ENCODE measurements at regions of chr12 and their contacts with region 1.

Region 1: GRCh38 chr12:19273482-19274330 is 144.2 kb downstream of the PLEKHA5 start:
- DNase-seq: peak; percentile 62 to 87 (median 74)
- H3K4me3 ChIP-seq: no peak overlapping the region
- H3K4me3 Mint-ChIP-seq: peak overlapping the region in 6 of 8 donors; percentile 10 to 79 (median 52)
- H3K27ac ChIP-seq: no peak overlapping the region
- H3K27ac Mint-ChIP-seq: peak overlapping the region; percentile 76 to 89 (median 81)
- H3K4me1 ChIP-seq: peaks cover 20% of the 10 kb centered on the region
- H3K4me1 Mint-ChIP-seq: peaks cover 15 to 29% (median 21%) of the 10 kb centered on the region in 4 donors
- H3K27me3 ChIP-seq: no peaks in the 10 kb centered on the region
- H3K27me3 Mint-ChIP-seq: peaks cover 0 to 2% of the 10 kb centered on the region in 2 donors

Region 2: GRCh38 chr12:19129486-19130223 is 144.1 kb before region 1 on chr12 and contains the start of gene PLEKHA5:
- CTCF ChIA-PET with region 1: no interaction called
- POLR2A ChIA-PET with region 1: interaction called, 7 read pairs
- intact Hi-C with region 1: loop called (anchors 5 kb)
- DNase-seq: peak; percentile 29 to 53 (median 38)
- H3K4me3 ChIP-seq: peak within 1 kb of the TSS; percentile 55 to 74
- H3K4me3 Mint-ChIP-seq: peak within 1 kb of the TSS; percentile 86 to 93 (median 91)
- H3K27ac ChIP-seq: peak within 1 kb of the TSS; percentile 38
- H3K27ac Mint-ChIP-seq: peak within 1 kb of the TSS; percentile 74 to 90 (median 88)
- H3K4me1 ChIP-seq: peaks cover 14% of the 10 kb centered on the region
- H3K4me1 Mint-ChIP-seq: peaks cover 10 to 27% (median 19%) of the 10 kb centered on the region in 4 donors
- H3K27me3 ChIP-seq: no peaks in the 10 kb centered on the region
- H3K27me3 Mint-ChIP-seq: peaks cover 0 to 7% of the 10 kb centered on the region in 2 donors
- total RNA-seq, gene PLEKHA5: 15.6 to 15.9 TPM

Region 3: DNA sequence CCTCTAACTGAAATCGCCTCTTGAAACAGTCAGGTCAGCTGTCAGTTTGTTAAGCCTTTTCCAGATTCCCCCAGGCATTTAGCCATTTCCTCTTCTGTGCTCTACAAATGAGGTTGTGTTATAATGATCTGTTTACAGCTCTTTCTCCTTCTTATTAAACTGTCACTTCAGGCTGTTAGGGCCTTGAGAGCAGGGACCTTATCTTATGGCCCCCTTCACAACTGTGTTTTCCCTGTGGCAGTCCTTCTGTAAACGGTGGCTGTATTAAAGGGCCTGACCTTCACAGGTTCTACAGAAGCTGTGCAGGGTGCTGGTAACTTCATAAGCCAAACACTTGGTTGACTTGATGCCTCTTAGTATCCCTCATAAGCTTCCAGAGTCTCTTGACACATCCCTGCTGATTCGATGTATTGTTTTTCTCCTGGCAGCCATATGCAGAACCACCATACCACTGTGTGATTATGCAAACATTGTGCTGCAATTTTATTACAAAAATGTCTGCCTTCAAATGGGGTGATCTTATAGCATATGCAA is 39.5 kb before region 1 on chr12:
- CTCF ChIA-PET with region 1: no interaction called
- POLR2A ChIA-PET with region 1: interaction called, 3 read pairs
- intact Hi-C with region 1: loop called (anchors 5 kb)
- DNase-seq: no peak
- H3K4me3 ChIP-seq: no peak overlapping the region
- H3K4me3 Mint-ChIP-seq: no peak overlapping the region
- H3K27ac ChIP-seq: no peak overlapping the region
- H3K27ac Mint-ChIP-seq: peak overlapping the region in 1 of 7 donors; percentile 17
- H3K4me1 ChIP-seq: no peaks in the 10 kb centered on the region
- H3K4me1 Mint-ChIP-seq: peaks cover 0 to 18% (median 1%) of the 10 kb centered on the region in 4 donors
- H3K27me3 ChIP-seq: no peaks in the 10 kb centered on the region
- H3K27me3 Mint-ChIP-seq: no peaks in the 10 kb centered on the region

Region 4: GRCh38 chr12:19248929-19249602 is 24.6 kb before region 1 on chr12:
- CTCF ChIA-PET with region 1: no interaction called
- POLR2A ChIA-PET with region 1: no interaction called
- intact Hi-C with region 1: no loop called
- DNase-seq: no peak
- H3K4me3 ChIP-seq: no peak overlapping the region
- H3K4me3 Mint-ChIP-seq: no peak overlapping the region
- H3K27ac ChIP-seq: no peak overlapping the region
- H3K27ac Mint-ChIP-seq: peak overlapping the region in 1 of 7 donors; percentile 20
- H3K4me1 ChIP-seq: no peaks in the 10 kb centered on the region
- H3K4me1 Mint-ChIP-seq: no peaks in the 10 kb centered on the region
- H3K27me3 ChIP-seq: no peaks in the 10 kb centered on the region
- H3K27me3 Mint-ChIP-seq: peaks cover 0 to 1% of the 10 kb centered on the region in 2 donors